ENCODE measurements at regions of chrX and their contacts with region 1.

Region 1: DNA sequence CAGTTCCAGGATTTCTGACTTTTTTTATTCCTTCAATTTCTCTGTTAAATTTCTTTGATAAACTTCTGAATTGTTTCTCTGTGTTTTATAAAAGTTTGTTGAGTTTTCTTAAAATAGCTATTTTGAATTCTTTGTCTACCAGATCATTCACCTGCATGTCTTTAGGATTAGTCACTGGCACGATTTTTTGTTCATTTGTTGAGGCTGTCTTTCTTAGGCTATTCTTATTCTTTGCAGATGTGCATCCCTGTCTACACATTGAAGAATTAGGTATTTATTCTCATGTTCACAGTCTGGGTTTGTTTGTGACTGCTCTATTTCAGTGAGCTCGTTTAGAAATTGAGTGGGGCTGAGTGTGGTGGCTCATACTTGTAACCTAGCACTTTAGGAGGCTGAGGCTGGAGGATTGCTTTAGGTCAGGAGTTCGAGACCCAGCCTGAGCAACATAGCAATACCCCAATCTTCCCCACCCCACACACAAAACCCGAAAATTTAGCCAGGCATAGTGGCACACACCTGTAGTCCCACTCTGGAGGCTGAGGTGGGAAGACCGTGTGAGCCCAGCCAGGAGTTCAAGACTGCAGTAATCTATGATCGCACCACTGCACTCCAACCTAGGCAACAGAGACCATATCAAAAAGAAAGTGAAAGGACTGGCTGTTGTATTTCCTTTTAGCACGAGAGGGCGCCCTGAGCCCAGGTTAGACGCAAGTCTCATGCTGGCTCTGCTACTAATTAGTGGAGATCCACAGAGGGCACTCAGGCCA is 42.0 kb downstream of the F8 start:
- DNase-seq: peak; percentile 48
- H3K4me3 ChIP-seq: peak overlapping the region; percentile 26 to 30 (median 28)
- H3K27ac ChIP-seq: peak overlapping the region; percentile 28
- H3K4me1 ChIP-seq: peaks cover 10% of the 10 kb centered on the region
- H3K27me3 ChIP-seq: no peaks in the 10 kb centered on the region
- CTCF ChIP-seq: peak; percentile 36 to 63

Region 2: GRCh38 chrX:154918060-154918483 is 62.4 kb before region 1 on chrX:
- CTCF ChIA-PET with region 1: no interaction called
- dilution Hi-C with region 1: no loop called
- in situ Hi-C with region 1: no loop called
- intact Hi-C with region 1: loop called (anchors 1 kb)
- DNase-seq: peak; percentile 52
- H3K4me3 ChIP-seq: no peak overlapping the region
- H3K27ac ChIP-seq: no peak overlapping the region
- H3K4me1 ChIP-seq: no peaks in the 10 kb centered on the region
- H3K27me3 ChIP-seq: no peaks in the 10 kb centered on the region
- CTCF ChIP-seq: peak; percentile 59 to 69

Region 3: GRCh38 chrX:155070975-155071693 is 90.6 kb after region 1 on chrX and contains the starts of genes BRCC3, CMC4 and MTCP1:
- CTCF ChIA-PET with region 1: no interaction called
- dilution Hi-C with region 1: loop called (anchors 5 kb)
- in situ Hi-C with region 1: no loop called
- intact Hi-C with region 1: loop called (anchors 5 kb)
- DNase-seq: peak; percentile 75
- H3K4me3 ChIP-seq: peak within 1 kb of the TSS; percentile 69 to 82 (median 75)
- H3K27ac ChIP-seq: peak within 1 kb of the TSS; percentile 78
- H3K4me1 ChIP-seq: peaks cover 14% of the 10 kb centered on the region
- H3K27me3 ChIP-seq: no peaks in the 10 kb centered on the region
- CTCF ChIP-seq: no peak
- total RNA-seq, gene BRCC3: 10.2 to 22.1 TPM
- total RNA-seq, gene CMC4: 6.6 to 10.7 TPM
- total RNA-seq, gene MTCP1: 1.8 to 23.4 TPM

Region 4: DNA sequence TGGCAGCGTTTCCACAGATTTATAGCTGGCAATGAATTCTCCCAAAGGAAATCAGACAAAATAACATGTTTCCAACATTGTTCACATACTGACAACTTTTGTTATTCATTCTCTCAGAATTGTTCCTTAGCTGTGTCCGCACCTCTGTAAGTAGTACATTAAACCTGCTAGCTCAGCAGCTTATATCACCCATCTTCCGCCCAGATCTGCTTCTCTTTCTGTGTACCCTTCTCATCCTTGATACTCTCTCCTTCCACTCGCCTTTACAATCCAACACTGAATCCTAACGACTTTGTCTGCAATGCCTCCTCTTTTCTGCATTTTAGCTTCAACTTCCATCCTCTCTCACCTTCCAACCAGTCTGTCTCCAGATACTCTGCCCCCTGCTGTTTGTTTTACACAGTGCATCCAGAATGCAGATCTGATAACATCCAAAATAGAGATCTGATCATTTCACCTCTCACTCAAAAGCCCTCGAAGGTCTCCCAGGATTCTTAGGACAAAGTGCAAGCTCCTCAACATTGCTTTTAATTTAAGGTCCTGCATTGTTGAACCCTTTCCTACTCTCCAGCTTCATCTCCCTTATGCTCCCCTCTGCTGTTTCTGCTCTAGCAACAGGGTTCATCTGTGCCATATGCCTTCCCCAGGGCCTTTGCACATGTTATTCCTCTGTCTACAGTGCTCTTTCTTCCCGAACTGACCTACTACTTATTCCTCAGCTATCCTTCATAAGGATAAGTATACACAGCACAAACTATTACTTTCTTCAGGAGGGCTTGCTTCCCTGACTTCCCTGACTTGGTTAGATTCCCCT is 168.4 kb after region 1 on chrX:
- CTCF ChIA-PET with region 1: no interaction called
- dilution Hi-C with region 1: no loop called
- in situ Hi-C with region 1: no loop called
- intact Hi-C with region 1: loop called (anchors 5 kb)
- DNase-seq: peak; percentile 12
- H3K4me3 ChIP-seq: no peak overlapping the region
- H3K27ac ChIP-seq: no peak overlapping the region
- H3K4me1 ChIP-seq: no peaks in the 10 kb centered on the region
- H3K27me3 ChIP-seq: no peaks in the 10 kb centered on the region
- CTCF ChIP-seq: peak; percentile 30 to 60

Region 5: GRCh38 chrX:155188786-155189185 is 208.3 kb after region 1 on chrX:
- CTCF ChIA-PET with region 1: no interaction called
- dilution Hi-C with region 1: no loop called
- in situ Hi-C with region 1: no loop called
- intact Hi-C with region 1: no loop called
- DNase-seq: no peak
- H3K4me3 ChIP-seq: no peak overlapping the region
- H3K27ac ChIP-seq: no peak overlapping the region
- H3K4me1 ChIP-seq: no peaks in the 10 kb centered on the region
- H3K27me3 ChIP-seq: no peaks in the 10 kb centered on the region
- CTCF ChIP-seq: no peak

Region 6: DNA sequence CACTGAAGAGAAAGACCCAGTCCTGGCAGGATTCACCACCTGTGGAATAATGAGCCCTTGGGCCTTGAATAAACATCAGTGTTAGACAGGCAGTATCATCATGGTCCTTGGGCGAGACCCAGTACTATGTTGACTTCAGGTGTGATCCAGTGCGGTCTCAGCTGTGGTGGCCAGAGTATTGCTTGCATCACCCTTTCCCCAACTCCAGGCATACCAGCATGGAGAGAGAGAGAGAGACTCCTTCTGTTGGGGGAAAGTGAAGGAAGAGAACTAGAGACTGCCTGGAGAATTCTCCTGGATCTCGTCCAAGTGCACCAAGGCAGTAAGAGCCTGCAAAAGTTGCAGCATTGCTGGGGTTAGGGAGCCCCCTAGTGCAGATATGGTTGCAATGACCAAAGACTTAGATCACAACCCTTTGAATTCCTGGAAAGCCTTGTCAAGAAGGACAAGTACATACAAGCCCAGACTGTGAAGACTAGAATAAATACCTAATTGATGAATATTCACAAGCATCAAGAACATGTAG is 839.5 kb after region 1 on chrX:
- CTCF ChIA-PET with region 1: no interaction called
- dilution Hi-C with region 1: no loop called
- in situ Hi-C with region 1: no loop called
- intact Hi-C with region 1: loop called (anchors 1 kb)
- DNase-seq: peak; percentile 88
- H3K4me3 ChIP-seq: no peak overlapping the region
- H3K27ac ChIP-seq: no peak overlapping the region
- H3K4me1 ChIP-seq: peaks cover 9% of the 10 kb centered on the region
- H3K27me3 ChIP-seq: no peaks in the 10 kb centered on the region
- CTCF ChIP-seq: peak; percentile 49 to 68

Measured in mammary epithelial cell (primary cell).